ENCODE measurements at regions of chr4 and their contacts with region 1.

Region 1: GRCh38 chr4:2418650-2419571 is at the start of gene CFAP99:
- DNase-seq: peak; percentile 98
- H3K4me3 ChIP-seq: peak within 1 kb of the TSS; percentile 71 to 88 (median 72)
- H3K27ac ChIP-seq: peak within 1 kb of the TSS in 3 of 4 donors; percentile 43 to 62 (median 48)
- H3K4me1 ChIP-seq: peaks cover 21 to 41% (median 39%) of the 10 kb centered on the region in 4 donors
- H3K27me3 ChIP-seq: peaks cover 0 to 69% (median 13%) of the 10 kb centered on the region in 4 donors
- CTCF ChIP-seq: peak in 2 of 3 experiments; percentile 4 to 21
- EP300 ChIP-seq: no peak
- POLR2A ChIP-seq: no peak
- total RNA-seq, gene CFAP99: 1.5 TPM in 1 of 4 donors, not detected in the others

Region 2: DNA sequence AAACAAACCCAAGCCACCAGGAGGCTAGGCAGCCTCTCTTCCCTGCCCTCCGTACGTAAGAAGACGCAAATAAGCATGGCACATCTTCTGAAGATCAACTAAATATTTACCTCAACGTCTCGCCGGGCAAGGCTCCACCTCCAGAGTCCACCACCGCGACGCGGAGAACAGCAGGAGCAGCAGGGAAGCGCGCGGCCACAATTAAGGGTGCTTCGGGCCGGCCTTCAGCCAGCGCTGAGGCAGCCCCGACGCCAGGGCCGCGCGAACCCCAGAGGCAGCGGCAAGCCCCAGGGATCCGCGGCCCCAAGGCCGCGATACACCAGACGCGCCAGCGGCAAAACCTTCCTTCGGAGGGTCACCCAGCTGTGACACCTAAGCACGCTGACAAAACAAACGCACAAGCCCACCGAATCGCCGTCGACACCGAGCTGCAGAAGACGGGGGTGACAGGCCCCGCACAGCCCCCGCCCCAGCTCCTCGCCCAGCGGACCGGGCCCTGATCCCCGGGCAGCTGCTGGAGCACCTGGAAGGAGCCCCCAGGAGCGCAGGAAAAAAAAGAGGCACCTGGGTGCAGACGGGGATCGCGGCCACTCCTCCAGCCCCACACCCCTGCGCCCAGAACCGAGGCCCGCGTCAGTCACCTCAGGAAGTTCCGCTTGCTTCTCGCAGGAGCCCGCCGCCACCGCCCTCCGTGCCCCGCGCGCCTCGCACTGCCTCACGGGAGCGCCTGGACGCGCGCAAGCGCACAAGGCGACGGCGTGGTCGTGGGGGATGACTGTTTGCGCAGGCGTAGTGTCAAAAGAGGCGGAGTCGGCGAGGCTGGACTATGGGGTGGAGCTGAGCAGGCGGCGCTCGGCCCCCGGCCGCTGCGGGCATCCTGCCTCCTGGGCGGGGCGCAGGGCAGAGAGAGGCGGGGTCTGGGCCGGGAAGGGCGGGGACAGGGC is 177.2 kb before region 1 on chr4 and contains the starts of genes HAUS3 and POLN:
- intact Hi-C with region 1: loop called (anchors 5 kb)
- DNase-seq: peak; percentile 99
- H3K4me3 ChIP-seq: peak within 1 kb of the TSS; percentile 75 to 94 (median 84)
- H3K27ac ChIP-seq: peak within 1 kb of the TSS; percentile 77 to 89 (median 82)
- H3K4me1 ChIP-seq: peaks cover 51 to 90% (median 82%) of the 10 kb centered on the region in 4 donors
- H3K27me3 ChIP-seq: no peaks in the 10 kb centered on the region
- CTCF ChIP-seq: no peak
- EP300 ChIP-seq: no peak
- POLR2A ChIP-seq: peak; percentile 65
- total RNA-seq, gene HAUS3: 9.9 to 14.1 (median 11.3) TPM
- total RNA-seq, gene POLN: 1.2 to 3.3 (median 2.7) TPM

Region 3: GRCh38 chr4:2262143-2262943 is 156.6 kb before region 1 on chr4:
- intact Hi-C with region 1: loop called (anchors 5 kb)
- DNase-seq: peak; percentile 100
- H3K4me3 ChIP-seq: peak overlapping the region; percentile 91 to 96 (median 93)
- H3K27ac ChIP-seq: peak overlapping the region; percentile 93 to 96 (median 95)
- H3K4me1 ChIP-seq: peaks cover 64 to 88% (median 77%) of the 10 kb centered on the region in 4 donors
- H3K27me3 ChIP-seq: no peaks in the 10 kb centered on the region
- CTCF ChIP-seq: no peak
- EP300 ChIP-seq: no peak
- POLR2A ChIP-seq: peak; percentile 95

Region 4: DNA sequence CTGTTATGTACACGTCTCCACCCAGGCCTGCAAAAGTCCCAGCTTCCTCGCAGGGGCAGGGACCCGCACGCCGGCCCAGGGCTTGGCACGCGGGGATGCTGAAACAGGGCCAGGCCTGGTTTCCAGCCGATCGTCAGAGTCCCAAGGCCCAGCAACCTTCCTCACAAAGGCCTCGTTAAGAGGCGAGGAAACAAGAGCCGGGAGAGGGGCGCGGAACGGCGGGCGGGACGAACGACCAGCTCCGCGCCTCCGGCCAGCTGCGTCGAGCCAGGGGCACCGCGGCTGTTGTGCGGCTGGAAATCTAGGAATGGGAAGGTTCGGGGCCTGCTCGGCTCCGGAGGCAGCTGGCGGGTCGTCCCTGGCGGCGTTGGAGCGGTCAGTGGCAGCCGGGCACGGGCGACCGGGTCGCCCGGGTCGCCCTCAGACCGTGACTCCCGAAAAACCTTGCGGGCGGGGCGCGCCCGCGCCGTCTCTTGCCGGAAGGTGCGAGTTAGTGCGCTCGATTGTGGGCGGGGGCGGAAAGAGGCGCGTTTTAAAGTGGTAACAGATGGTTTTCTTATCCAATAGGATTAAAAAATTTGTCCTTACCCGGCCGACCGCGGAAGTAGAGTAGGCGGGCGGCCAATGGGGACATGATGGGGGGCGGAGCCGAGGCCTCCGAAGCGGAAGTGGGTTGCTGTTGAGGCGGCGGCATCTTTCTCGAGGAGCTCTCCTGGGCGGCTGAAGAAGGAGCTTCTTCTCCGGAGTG is 49.7 kb after region 1 on chr4 and contains the start of gene RNF4:
- intact Hi-C with region 1: loop called (anchors 5 kb)
- DNase-seq: peak; percentile 99
- H3K4me3 ChIP-seq: peak within 1 kb of the TSS; percentile 77 to 95 (median 88)
- H3K27ac ChIP-seq: peak within 1 kb of the TSS; percentile 87 to 97 (median 94)
- H3K4me1 ChIP-seq: peaks cover 22 to 56% (median 41%) of the 10 kb centered on the region in 4 donors
- H3K27me3 ChIP-seq: no peaks in the 10 kb centered on the region
- CTCF ChIP-seq: no peak
- EP300 ChIP-seq: no peak
- POLR2A ChIP-seq: no peak
- total RNA-seq, gene RNF4: 33.2 to 49.0 (median 40.7) TPM

Region 5: DNA sequence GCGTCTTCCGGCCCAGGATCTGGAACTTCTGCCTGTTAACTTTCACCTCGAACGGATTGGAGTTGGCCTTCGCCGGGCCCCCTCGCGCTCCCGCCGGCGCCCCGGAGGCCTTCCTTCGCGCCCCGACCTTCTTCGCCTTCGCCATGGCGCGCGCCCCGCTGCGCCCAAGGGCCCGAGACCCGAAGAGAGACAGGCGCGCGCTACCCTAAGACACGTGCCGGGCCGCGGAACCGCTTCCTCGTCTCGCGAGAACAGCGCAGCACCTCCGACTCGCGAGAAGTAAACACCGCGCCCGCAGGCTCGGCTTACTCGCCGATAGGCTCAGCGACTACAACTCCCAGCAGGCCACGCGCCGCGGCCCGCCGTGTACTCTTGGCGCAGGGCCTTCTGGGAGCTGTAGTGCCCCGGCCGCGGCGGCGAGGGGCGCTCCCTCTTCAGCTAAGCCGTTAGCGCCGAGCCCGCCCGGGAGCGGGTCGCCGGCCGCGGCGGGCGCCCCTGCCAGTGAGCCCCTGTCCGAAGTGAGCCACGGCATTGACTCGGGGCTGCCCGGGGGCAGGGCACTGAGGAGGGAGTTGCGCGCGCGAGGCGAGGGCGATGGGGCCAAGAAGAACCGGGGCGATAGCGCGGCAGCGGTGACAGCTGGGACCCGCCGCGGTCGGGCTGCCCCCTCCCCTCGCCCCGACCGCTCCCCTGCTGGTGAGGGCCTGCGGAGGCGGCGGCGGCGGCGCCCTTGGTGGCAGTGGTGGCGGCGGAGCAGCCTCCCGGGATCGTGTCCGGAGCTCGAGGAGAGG is 544.5 kb after region 1 on chr4 and contains the starts of genes GRK4 and NOP14:
- intact Hi-C with region 1: loop called (anchors 10 kb)
- DNase-seq: peak; percentile 98
- H3K4me3 ChIP-seq: peak within 1 kb of the TSS; percentile 81 to 99 (median 98)
- H3K27ac ChIP-seq: peak within 1 kb of the TSS; percentile 84 to 90 (median 90)
- H3K4me1 ChIP-seq: peaks cover 25 to 49% (median 43%) of the 10 kb centered on the region in 4 donors
- H3K27me3 ChIP-seq: no peaks in the 10 kb centered on the region
- CTCF ChIP-seq: peak; percentile 39 to 57 (median 42)
- EP300 ChIP-seq: no peak
- POLR2A ChIP-seq: peak; percentile 18
- total RNA-seq, gene GRK4: 4.8 to 8.0 (median 6.4) TPM
- total RNA-seq, gene NOP14: 16.7 to 21.1 (median 18.8) TPM

Measured in esophagus muscularis mucosa (tissue), 4 donors.